ENCODE measurements at regions of chr13 and their contacts with region 1.

Region 1: GRCh38 chr13:73090116-73090811 is 31.5 kb downstream of the KLF5 start:
- DNase-seq: peak; percentile 69 to 80
- H3K4me3 ChIP-seq: no peak overlapping the region
- H3K27ac ChIP-seq: peak overlapping the region; percentile 86
- H3K4me1 ChIP-seq: peaks cover 15% of the 10 kb centered on the region
- H3K27me3 ChIP-seq: no peaks in the 10 kb centered on the region
- CTCF ChIP-seq: no peak

Region 2: DNA sequence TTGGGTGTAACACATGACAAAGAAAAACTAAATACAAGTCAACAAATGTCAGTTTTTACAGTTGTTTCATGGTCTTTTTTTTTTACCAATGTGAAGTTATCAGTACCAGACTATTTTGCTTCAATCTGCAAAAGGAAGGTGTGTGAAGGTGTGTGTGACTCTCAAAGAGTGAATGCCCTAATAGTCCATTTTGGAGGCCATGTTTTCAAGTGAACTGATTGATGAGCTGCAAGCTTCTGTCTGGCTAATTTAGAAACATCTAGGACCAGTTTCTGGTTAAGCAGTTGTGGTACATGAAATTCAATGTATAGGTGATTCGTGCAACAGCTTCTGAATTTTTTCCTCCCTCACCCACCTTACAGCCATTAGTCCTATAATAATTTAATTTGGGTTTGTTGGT is 15.3 kb before region 1 on chr13:
- CTCF ChIA-PET with region 1: no interaction called
- POLR2A ChIA-PET with region 1: interaction called, 10 read pairs
- intact Hi-C with region 1: no loop called
- DNase-seq: no peak
- H3K4me3 ChIP-seq: no peak overlapping the region
- H3K27ac ChIP-seq: peak overlapping the region; percentile 63; the same call in 1 of the 2 replicates
- H3K4me1 ChIP-seq: peaks cover 23% of the 10 kb centered on the region; the same call in 1 of the 2 replicates
- H3K27me3 ChIP-seq: no peaks in the 10 kb centered on the region
- CTCF ChIP-seq: no peak

Region 3: GRCh38 chr13:73189370-73190165 is 99.3 kb after region 1 on chr13:
- CTCF ChIA-PET with region 1: interaction called, 10 read pairs
- POLR2A ChIA-PET with region 1: interaction called, 8 read pairs
- intact Hi-C with region 1: no loop called
- DNase-seq: peak in 1 of 2 experiments; percentile 62
- H3K4me3 ChIP-seq: no peak overlapping the region
- H3K27ac ChIP-seq: no peak overlapping the region
- H3K4me1 ChIP-seq: peaks cover 30% of the 10 kb centered on the region
- H3K27me3 ChIP-seq: no peaks in the 10 kb centered on the region
- CTCF ChIP-seq: no peak

Region 4: GRCh38 chr13:74289861-74290773 is 1199.9 kb after region 1 on chr13:
- CTCF ChIA-PET with region 1: no interaction called
- POLR2A ChIA-PET with region 1: no interaction called
- intact Hi-C with region 1: no loop called
- DNase-seq: peak; percentile 38 to 40
- H3K4me3 ChIP-seq: no peak overlapping the region
- H3K27ac ChIP-seq: no peak overlapping the region
- H3K4me1 ChIP-seq: no peaks in the 10 kb centered on the region
- H3K27me3 ChIP-seq: no peaks in the 10 kb centered on the region
- CTCF ChIP-seq: no peak

Measured in PC-9 (cell line).